ENCODE measurements at regions of chr3 and their contacts with region 1.

Region 1: GRCh38 chr3:35965908-35966307 is 326.6 kb downstream of the ARPP21 start:
- DNase-seq: no peak
- ATAC-seq: peak in 2 of 4 donors; percentile 43 to 48
- H3K4me3 ChIP-seq: no peak overlapping the region
- H3K27ac ChIP-seq: no peak overlapping the region
- H3K4me1 ChIP-seq: peaks cover 0 to 11% (median 0%) of the 10 kb centered on the region in 12 donors
- H3K27me3 ChIP-seq: no peaks in the 10 kb centered on the region
- CTCF ChIP-seq: peak; percentile 46 to 73 (median 63)
- POLR2A ChIP-seq: no peak

Region 2: GRCh38 chr3:34724916-34725499 is 1240.9 kb before region 1 on chr3:
- intact Hi-C with region 1: no loop called
- DNase-seq: no peak
- ATAC-seq: no peak
- H3K4me3 ChIP-seq: no peak overlapping the region
- H3K27ac ChIP-seq: no peak overlapping the region
- H3K4me1 ChIP-seq: no peaks in the 10 kb centered on the region
- H3K27me3 ChIP-seq: no peaks in the 10 kb centered on the region
- CTCF ChIP-seq: no peak
- POLR2A ChIP-seq: no peak

Region 3: GRCh38 chr3:34988296-34988695 is 977.6 kb before region 1 on chr3:
- intact Hi-C with region 1: no loop called
- DNase-seq: peak in 1 of 5 donors; percentile 59
- ATAC-seq: no peak
- H3K4me3 ChIP-seq: no peak overlapping the region
- H3K27ac ChIP-seq: no peak overlapping the region
- H3K4me1 ChIP-seq: no peaks in the 10 kb centered on the region
- H3K27me3 ChIP-seq: no peaks in the 10 kb centered on the region
- CTCF ChIP-seq: no peak
- POLR2A ChIP-seq: no peak

Region 4: DNA sequence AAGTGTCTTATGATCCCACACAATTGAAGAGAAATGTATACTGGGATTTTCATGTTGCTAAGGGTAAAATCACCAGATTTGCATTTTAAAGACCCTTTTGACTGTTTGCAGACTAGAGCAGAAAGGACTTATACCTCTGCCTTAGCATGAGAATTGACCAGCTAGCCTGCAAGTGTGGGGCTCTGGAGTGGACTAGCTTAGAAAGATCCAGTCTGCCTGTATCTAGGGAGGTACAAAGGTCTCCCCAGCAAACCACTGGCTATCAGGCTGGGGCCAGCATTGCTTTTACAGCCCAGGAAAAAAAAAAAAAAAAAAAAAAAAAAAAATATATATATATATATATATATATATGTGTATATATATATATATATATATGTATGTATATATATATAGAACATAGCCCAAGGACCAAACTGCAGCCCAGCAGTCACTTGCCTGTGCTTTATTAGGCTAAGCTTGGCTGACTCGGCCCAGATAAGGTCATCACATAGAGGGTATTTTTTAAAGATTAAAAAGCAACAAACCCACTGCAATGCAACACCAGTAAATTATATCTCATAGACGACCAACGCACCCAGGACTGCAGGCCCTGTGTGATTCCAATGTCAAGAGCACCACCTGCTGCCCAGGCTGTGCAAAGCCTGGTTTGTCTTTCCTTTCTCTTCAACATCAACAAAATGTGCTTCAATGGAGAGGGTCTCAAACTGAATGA is 734.8 kb after region 1 on chr3:
- intact Hi-C with region 1: loop called (anchors 1 to 5 kb)
- DNase-seq: peak in 4 of 5 donors; percentile 32 to 50 (median 42)
- ATAC-seq: peak; percentile 48 to 83 (median 76)
- H3K4me3 ChIP-seq: no peak overlapping the region
- H3K27ac ChIP-seq: no peak overlapping the region
- H3K4me1 ChIP-seq: no peaks in the 10 kb centered on the region
- H3K27me3 ChIP-seq: no peaks in the 10 kb centered on the region
- CTCF ChIP-seq: peak; percentile 57 to 87 (median 74)
- POLR2A ChIP-seq: no peak

Region 5: DNA sequence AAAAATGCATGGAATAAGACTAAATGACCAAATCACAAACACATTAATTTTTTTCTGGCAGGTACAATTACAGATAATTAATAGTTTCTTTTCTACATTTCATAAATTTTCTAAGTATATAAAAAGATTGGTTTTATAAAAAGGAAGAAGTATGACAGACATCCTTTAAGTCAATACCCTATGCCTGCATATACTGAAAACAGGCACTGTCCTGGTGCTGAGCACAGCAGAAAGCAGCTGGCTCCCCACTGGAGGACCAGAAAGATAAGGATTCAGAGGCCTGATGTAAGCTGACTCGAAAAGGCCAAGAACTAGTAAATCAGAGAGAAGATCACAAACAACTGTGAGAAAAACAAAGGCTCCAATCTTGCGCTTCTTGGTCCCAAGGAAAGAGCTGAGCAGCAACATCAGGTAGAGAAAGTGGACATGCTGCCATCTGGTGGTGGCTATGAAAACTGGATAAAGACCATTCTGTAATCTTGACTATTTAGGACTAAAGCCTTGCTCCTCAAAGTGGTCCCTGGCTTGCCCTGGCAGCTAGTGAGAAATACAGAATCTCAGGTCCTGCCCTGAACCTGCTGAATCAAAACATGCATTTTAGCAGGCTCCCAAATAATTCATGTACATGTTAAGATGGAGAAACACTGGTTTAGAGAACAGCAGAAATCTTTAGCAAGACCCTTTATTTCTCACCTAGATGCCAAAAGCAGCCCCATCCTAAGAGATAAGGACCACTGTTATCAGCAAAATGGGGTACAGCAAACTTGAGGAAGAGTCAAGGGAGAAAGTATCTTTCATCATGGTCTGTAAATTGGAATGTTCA is 902.9 kb after region 1 on chr3:
- intact Hi-C with region 1: loop called in 2 of 10 experiments (anchors 5 to 10 kb)
- DNase-seq: peak in 2 of 5 donors; percentile 38 to 60
- ATAC-seq: peak in 3 of 4 donors; percentile 69 to 87 (median 79)
- H3K4me3 ChIP-seq: no peak overlapping the region
- H3K27ac ChIP-seq: no peak overlapping the region
- H3K4me1 ChIP-seq: peaks cover 0 to 14% (median 0%) of the 10 kb centered on the region in 12 donors
- H3K27me3 ChIP-seq: no peaks in the 10 kb centered on the region
- CTCF ChIP-seq: peak; percentile 69 to 94 (median 78)
- POLR2A ChIP-seq: no peak